ENCODE measurements at regions of chr1 and their contacts with region 1.

Region 1: GRCh38 chr1:100459358-100460114 is 78.4 kb upstream of the GPR88 start:
- DNase-seq: peak; percentile 83
- H3K4me3 Mint-ChIP-seq: no peak overlapping the region
- H3K27ac Mint-ChIP-seq: no peak overlapping the region
- H3K4me1 Mint-ChIP-seq: peaks cover 7% of the 10 kb centered on the region
- H3K27me3 Mint-ChIP-seq: no peaks in the 10 kb centered on the region
- CTCF ChIP-seq: peak; percentile 75

Region 2: DNA sequence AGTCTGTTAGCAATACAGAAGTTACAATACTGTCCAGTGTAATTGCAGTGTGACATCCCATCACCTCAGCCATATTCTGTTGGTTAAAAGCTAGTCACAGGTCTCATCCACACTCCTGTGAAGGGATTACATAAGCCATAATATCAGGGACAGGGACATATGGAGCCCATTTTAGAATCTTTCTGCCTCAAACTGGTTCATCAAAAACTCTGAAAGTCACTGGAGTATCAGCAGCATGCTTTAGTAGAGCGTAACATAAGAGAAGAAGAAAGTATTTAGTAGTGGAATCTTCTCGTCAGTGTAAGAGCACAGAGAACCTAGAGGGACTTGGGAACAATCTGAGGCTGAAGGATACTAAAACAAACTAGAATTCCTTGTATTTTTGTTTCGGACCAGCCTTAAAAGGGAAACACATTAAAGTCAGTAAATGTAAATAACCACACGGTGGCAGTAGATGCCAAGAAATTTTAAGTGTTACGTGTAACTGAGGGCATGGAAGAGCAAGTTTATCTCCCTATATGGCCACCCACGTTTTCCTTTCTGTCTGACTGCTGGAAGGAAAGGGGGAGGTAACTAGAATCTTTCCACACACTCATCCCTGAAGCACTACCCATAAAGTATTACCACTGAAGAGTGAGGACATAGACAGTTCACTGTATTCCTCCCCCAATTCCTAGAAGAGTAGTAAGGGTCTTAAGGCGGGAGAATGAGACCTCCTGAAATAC is 651.0 kb before region 1 on chr1:
- CTCF ChIA-PET with region 1: interaction called, 19 read pairs
- POLR2A ChIA-PET with region 1: no interaction called
- intact Hi-C with region 1: loop called (anchors 1 kb)
- DNase-seq: peak; percentile 90
- H3K4me3 Mint-ChIP-seq: no peak overlapping the region
- H3K27ac Mint-ChIP-seq: no peak overlapping the region
- H3K4me1 Mint-ChIP-seq: no peaks in the 10 kb centered on the region
- H3K27me3 Mint-ChIP-seq: no peaks in the 10 kb centered on the region
- CTCF ChIP-seq: peak; percentile 49

Region 3: GRCh38 chr1:100265931-100266740 is 193.4 kb before region 1 on chr1 and contains the start of gene RTCA:
- CTCF ChIA-PET with region 1: interaction called, 13 read pairs
- POLR2A ChIA-PET with region 1: interaction called, 7 read pairs
- intact Hi-C with region 1: no loop called
- DNase-seq: peak; percentile 98
- H3K4me3 Mint-ChIP-seq: peak within 1 kb of the TSS; percentile 90
- H3K27ac Mint-ChIP-seq: peak within 1 kb of the TSS; percentile 85
- H3K4me1 Mint-ChIP-seq: peaks cover 10% of the 10 kb centered on the region
- H3K27me3 Mint-ChIP-seq: no peaks in the 10 kb centered on the region
- CTCF ChIP-seq: no peak
- total RNA-seq, gene RTCA: 60.4 and 62.3 TPM in 2 replicates

Region 4: GRCh38 chr1:100308777-100309176 is 150.8 kb before region 1 on chr1:
- CTCF ChIA-PET with region 1: interaction called, 11 read pairs
- POLR2A ChIA-PET with region 1: no interaction called
- intact Hi-C with region 1: no loop called
- DNase-seq: peak; percentile 6
- H3K4me3 Mint-ChIP-seq: no peak overlapping the region
- H3K27ac Mint-ChIP-seq: no peak overlapping the region
- H3K4me1 Mint-ChIP-seq: peaks cover 5% of the 10 kb centered on the region
- H3K27me3 Mint-ChIP-seq: no peaks in the 10 kb centered on the region
- CTCF ChIP-seq: no peak

Region 5: GRCh38 chr1:100469578-100469977 is 10.0 kb after region 1 on chr1:
- CTCF ChIA-PET with region 1: interaction called, 26 read pairs
- POLR2A ChIA-PET with region 1: no interaction called
- intact Hi-C with region 1: no loop called
- DNase-seq: no peak
- H3K4me3 Mint-ChIP-seq: no peak overlapping the region
- H3K27ac Mint-ChIP-seq: no peak overlapping the region
- H3K4me1 Mint-ChIP-seq: no peaks in the 10 kb centered on the region
- H3K27me3 Mint-ChIP-seq: no peaks in the 10 kb centered on the region
- CTCF ChIP-seq: no peak

Region 6: GRCh38 chr1:100606438-100606837 is 146.9 kb after region 1 on chr1:
- CTCF ChIA-PET with region 1: interaction called, 6 read pairs
- POLR2A ChIA-PET with region 1: no interaction called
- intact Hi-C with region 1: loop called (anchors 2 kb)
- DNase-seq: peak; percentile 61
- H3K4me3 Mint-ChIP-seq: no peak overlapping the region
- H3K27ac Mint-ChIP-seq: no peak overlapping the region
- H3K4me1 Mint-ChIP-seq: no peaks in the 10 kb centered on the region
- H3K27me3 Mint-ChIP-seq: no peaks in the 10 kb centered on the region
- CTCF ChIP-seq: peak; percentile 65